ENCODE measurements at regions of chr3 and their contacts with region 1.

Region 1: DNA sequence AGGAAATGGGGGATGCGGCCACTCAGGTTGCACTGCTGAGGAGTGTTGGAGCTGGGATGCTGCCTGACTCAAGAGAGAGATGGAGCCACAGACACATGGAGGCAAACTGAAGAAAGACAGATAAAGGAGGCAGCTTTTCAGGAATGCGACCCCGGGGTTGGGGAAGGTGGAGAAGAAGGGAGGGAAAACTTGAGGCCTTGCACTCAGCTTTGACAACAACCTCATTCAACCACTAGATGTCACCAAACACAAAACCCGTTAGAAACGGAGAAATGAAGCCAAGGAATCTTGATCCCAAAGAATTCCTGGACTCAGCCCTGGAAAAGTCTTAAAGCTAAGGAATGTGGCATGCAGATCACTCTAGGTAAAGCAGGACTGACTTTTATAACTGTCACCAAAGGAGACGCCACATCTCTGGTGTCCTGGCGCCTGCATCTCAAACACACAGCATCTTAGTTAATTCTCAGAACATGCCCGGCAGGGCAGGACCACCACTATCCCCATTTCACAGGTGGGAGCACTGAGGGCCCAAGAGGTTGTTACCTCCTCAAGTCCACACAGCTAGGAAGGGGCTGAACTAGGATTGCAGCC is 59.6 kb upstream of the LMCD1 start:
- DNase-seq: peak; percentile 75 to 87
- ATAC-seq: peak; percentile 25 to 43; a peak in 4 of 6 replicates
- H3K4me3 ChIP-seq: no peak overlapping the region
- H3K27ac ChIP-seq: peak overlapping the region; percentile 94 to 99
- H3K4me1 ChIP-seq: peaks cover 53% of the 10 kb centered on the region
- CTCF ChIP-seq: peak; percentile 91
- EP300 ChIP-seq: no peak
- POLR2A ChIP-seq: no peak
- RAD21 ChIP-seq: peak; percentile 92

Region 2: DNA sequence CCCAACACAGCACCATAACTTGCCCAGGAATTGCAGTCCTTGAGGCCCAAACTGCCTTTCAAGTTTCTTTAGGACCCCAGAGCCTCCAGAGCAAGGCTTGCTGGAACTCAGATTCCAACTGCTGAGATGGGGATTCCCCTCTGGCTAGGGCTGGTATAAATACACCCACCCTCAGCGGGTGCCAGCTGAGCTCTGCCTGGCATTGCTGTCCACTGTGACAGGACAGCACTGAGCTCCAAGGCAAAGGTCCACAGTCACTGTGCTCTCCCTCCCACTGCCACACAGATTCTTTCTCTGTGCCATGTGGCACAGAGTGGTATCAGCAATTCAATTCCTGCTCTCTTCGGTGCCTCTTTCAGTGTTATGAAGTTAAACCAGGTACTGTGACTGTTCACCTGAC is 244.7 kb before region 1 on chr3:
- CTCF ChIA-PET with region 1: no interaction called
- POLR2A ChIA-PET with region 1: no interaction called
- DNase-seq: no peak
- ATAC-seq: no peak
- H3K4me3 ChIP-seq: no peak overlapping the region
- H3K27ac ChIP-seq: no peak overlapping the region
- H3K4me1 ChIP-seq: no peaks in the 10 kb centered on the region
- CTCF ChIP-seq: no peak
- EP300 ChIP-seq: no peak
- POLR2A ChIP-seq: no peak
- RAD21 ChIP-seq: no peak

Region 3: DNA sequence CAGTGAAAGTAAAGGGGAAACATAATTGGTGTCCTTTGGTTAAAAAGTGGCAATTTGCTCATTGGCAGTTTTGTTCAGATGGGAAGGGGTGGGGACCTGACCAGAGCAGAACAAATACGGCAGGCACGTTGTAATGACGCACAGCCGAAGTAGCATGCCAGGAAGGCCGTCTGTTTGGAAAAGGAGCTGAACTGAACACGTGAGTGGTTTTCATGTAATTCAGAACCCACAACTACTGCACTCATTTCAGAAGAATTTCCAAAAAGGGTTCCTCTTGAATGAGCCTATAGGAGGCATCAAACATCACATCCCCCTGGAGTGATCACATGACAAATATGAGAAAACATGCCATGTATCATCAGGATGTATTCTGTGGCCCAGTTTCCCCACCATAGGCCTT is 16.6 kb after region 1 on chr3:
- CTCF ChIA-PET with region 1: interaction called, 42 read pairs
- POLR2A ChIA-PET with region 1: interaction called, 51 read pairs
- DNase-seq: no peak
- ATAC-seq: no peak
- H3K4me3 ChIP-seq: no peak overlapping the region
- H3K27ac ChIP-seq: peak overlapping the region in 1 of 2 experiments; percentile 83; a peak in 3 of 6 replicates
- H3K4me1 ChIP-seq: peaks cover 29% of the 10 kb centered on the region
- CTCF ChIP-seq: no peak
- EP300 ChIP-seq: no peak
- POLR2A ChIP-seq: no peak
- RAD21 ChIP-seq: no peak

Region 4: DNA sequence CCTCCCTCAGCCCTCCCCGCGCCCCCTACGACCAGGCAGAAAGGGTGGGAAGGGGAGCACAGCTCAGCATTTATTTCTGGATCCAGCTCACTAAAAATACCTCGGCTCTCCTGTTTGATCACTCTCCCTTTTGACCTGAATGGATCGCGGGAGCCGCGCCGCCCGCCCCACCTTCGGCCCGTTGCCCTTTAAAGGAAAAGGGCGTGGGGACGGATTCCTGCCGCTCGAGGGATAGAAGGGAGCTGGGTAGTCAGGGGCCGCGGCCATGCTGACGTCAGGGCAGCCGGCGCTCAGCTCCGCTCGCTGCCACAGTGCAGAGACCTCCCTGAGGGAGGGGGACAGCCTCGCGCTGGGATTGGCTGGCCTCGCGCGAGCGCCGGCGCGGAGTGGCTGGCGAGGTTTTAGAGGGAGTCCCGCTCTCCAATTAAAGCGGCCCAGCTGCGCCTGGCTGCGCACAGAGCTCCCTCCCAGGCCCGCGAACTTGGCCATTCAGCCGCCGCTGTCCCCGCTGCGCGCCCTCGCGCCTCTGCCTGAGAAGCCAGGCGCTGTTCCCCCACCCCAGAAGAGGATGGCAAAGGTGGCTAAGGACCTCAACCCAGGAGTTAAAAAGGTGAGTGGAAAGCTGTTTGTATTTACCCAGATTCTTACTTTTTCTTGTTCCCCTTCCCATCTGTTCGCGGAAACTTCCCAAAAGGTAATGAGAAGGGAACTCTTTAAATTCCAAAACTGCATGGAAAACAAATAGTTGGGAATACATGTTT is 59.5 kb after region 1 on chr3 and contains the start of gene LMCD1:
- CTCF ChIA-PET with region 1: interaction called, 121 read pairs
- POLR2A ChIA-PET with region 1: interaction called, 194 read pairs
- DNase-seq: peak; percentile 88 to 97
- ATAC-seq: peak; percentile 91 to 94
- H3K4me3 ChIP-seq: peak within 1 kb of the TSS; percentile 51
- H3K27ac ChIP-seq: peak within 1 kb of the TSS; percentile 86 to 88
- H3K4me1 ChIP-seq: peaks cover 68% of the 10 kb centered on the region
- CTCF ChIP-seq: no peak
- EP300 ChIP-seq: no peak
- POLR2A ChIP-seq: peak; percentile 81
- RAD21 ChIP-seq: no peak; a peak in 1 of 5 replicates
- polyA plus RNA-seq, gene LMCD1: 85.4 and 86.1 TPM in 2 replicates

Region 5: GRCh38 chr3:8520816-8521403 is 78.8 kb after region 1 on chr3:
- CTCF ChIA-PET with region 1: interaction called, 10 read pairs
- POLR2A ChIA-PET with region 1: no interaction called
- DNase-seq: no peak
- ATAC-seq: no peak
- H3K4me3 ChIP-seq: no peak overlapping the region
- H3K27ac ChIP-seq: no peak overlapping the region
- H3K4me1 ChIP-seq: peaks cover 14% of the 10 kb centered on the region; the same call in 2 of the 3 replicates
- CTCF ChIP-seq: no peak
- EP300 ChIP-seq: no peak
- POLR2A ChIP-seq: no peak
- RAD21 ChIP-seq: no peak

Region 6: GRCh38 chr3:8555113-8555661 is 113.1 kb after region 1 on chr3:
- CTCF ChIA-PET with region 1: interaction called, 16 read pairs
- POLR2A ChIA-PET with region 1: no interaction called
- DNase-seq: no peak
- ATAC-seq: no peak; a peak in 1 of 6 replicates
- H3K4me3 ChIP-seq: no peak overlapping the region
- H3K27ac ChIP-seq: 0 out of 6 replicates have a peak overlapping the region, but pooled peaks of 1 of the 2 experiments have one; percentile 16
- H3K4me1 ChIP-seq: no peaks in the 10 kb centered on the region
- CTCF ChIP-seq: no peak
- EP300 ChIP-seq: no peak
- POLR2A ChIP-seq: no peak
- RAD21 ChIP-seq: no peak

Region 7: DNA sequence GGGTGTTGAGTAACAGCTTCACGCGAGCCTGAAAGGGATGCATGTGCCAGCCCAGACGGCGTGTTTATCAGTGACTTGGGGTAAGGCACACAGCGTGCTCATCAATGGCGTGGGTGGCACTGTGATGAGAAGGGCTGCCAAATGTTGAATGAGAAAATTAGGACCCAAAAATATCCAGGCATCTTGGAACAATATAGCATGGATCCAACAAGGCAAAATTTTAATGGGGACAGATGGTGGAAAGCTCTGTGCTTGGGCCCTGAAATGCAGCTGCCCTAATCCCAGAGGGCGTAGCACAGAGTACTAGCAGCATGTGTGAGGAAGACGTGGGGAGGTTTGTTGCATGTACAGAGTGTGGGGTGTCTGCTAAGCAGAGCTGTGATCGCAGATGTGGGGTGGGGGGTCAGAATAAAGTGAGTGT is 153.6 kb after region 1 on chr3:
- CTCF ChIA-PET with region 1: interaction called, 13 read pairs
- POLR2A ChIA-PET with region 1: no interaction called
- DNase-seq: no peak
- ATAC-seq: peak in 1 of 2 experiments; percentile 27; a peak in 1 of 6 replicates
- H3K4me3 ChIP-seq: no peak overlapping the region
- H3K27ac ChIP-seq: no peak overlapping the region
- H3K4me1 ChIP-seq: no peaks in the 10 kb centered on the region
- CTCF ChIP-seq: no peak
- EP300 ChIP-seq: no peak
- POLR2A ChIP-seq: no peak
- RAD21 ChIP-seq: no peak

Region 8: DNA sequence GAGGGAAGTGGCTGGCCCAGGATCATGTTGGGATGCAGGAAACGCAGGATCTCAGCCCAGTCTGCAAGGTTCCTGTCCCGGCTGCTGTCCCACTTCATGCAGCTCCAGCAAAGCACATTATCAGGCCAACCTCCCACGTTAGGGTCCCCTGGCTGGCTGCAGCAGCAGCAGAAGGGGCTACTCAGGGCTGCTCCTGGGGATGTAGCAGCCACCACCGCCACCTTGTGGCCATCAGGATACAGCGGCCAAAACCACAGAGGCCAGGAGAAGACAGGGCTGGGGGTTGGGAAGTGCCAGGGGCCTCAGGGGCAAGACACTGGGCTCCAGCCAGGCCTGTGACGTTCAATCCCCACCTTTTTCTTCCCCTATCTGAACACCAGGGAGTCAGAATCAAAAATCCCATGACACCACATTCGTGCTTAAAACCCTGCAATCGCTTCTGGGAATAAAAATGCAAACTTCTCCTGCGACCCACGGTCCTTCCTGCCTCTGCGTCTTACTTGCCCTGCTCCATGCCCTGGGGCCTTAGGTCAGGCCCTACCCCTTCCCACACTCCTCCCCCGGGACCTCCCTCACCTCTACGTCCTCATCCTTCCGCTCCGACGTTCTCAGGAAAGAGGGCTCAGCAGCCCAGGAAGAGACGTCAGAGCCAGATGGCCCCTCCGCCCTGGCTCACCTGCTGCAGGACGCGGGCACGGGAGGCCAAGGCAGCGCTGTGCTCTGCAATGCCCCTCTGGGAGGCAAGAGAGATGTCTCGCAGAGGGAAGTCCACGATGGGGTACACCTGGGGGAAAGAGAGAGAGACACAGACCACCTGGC is 181.0 kb after region 1 on chr3:
- CTCF ChIA-PET with region 1: interaction called, 65 read pairs
- POLR2A ChIA-PET with region 1: interaction called, 5 read pairs
- DNase-seq: peak; percentile 66 to 85
- ATAC-seq: peak; percentile 84 to 97
- H3K4me3 ChIP-seq: no peak overlapping the region
- H3K27ac ChIP-seq: peak overlapping the region; percentile 47 to 70; a peak in 5 of 6 replicates
- H3K4me1 ChIP-seq: peaks cover 18% of the 10 kb centered on the region
- CTCF ChIP-seq: peak; percentile 94
- EP300 ChIP-seq: no peak
- POLR2A ChIP-seq: no peak
- RAD21 ChIP-seq: peak; percentile 94 to 96

Measured in A549 (cell line).